Left lung (tissue), 14 donors: ENCODE measurements at regions of chr16 and their contacts with region 1.

Region 1: DNA sequence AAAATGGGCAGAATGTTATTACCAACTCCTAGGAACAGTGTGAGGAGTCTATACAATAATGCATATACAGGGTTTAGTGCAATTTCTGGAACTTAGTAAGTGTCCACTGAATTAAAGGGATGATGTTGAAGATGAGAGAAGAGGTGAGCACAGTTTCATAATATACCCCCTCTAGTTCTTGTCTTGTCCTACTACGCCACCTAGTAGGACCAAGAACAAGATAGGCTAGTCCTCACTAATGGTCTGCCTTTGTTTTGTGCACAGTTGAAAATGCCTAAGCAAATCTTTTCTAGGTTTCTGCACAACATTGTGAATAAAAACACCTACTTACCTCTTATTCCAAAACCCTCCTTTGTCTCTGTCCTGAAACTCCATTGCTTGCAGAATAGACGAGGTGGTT is 670.2 kb downstream of the CDH8 start:
- DNase-seq: no peak
- ATAC-seq: no peak
- H3K4me3 ChIP-seq: no peak overlapping the region
- H3K27ac ChIP-seq: no peak overlapping the region
- H3K4me1 ChIP-seq: no peaks in the 10 kb centered on the region
- H3K27me3 ChIP-seq: no peaks in the 10 kb centered on the region
- CTCF ChIP-seq: no peak

Region 2: DNA sequence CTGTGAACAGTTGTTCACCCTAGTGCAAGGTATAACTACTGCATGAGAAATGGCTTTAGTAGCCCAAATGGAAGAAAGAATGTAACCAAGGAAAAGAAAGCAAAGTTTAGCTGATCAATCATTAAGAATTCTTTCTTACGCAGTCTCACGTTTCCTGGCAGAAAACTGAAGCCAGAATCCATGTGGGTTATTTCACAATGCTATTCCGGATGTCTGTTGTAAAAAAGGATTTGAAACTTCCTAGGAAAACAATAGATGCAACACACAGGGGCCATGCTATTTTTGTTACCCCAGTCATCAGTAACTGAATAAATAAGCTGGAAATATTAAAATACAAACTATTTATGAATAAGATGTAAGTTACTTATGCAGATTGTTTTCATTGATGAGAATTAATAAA is 132.3 kb before region 1 on chr16:
- intact Hi-C with region 1: no loop called
- DNase-seq: peak in 2 of 4 donors; percentile 3 to 28
- ATAC-seq: no peak
- H3K4me3 ChIP-seq: no peak overlapping the region
- H3K27ac ChIP-seq: no peak overlapping the region
- H3K4me1 ChIP-seq: no peaks in the 10 kb centered on the region
- H3K27me3 ChIP-seq: no peaks in the 10 kb centered on the region
- CTCF ChIP-seq: no peak

Region 3: DNA sequence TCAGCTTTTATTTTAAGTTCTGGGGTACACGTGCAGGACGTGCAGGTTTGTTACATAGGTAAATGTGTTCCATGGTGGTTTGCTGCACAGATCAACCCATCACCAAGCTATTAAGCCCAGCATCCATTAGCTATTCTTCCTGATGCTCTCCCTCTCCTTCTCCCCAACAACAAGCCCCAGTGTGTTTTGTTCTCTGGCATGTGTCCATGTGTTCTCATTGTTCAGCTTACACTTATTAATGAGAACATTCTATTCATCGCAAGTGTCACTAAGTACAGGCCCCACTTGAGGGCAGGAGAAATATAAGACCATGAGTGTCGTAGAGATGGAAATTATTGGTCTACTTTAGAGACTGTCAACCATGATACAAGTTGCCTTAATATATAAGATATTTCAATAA is 55.1 kb after region 1 on chr16:
- intact Hi-C with region 1: loop called in 1 of 2 experiments (anchors 10 kb)
- DNase-seq: no peak
- ATAC-seq: no peak
- H3K4me3 ChIP-seq: no peak overlapping the region
- H3K27ac ChIP-seq: no peak overlapping the region
- H3K4me1 ChIP-seq: no peaks in the 10 kb centered on the region
- H3K27me3 ChIP-seq: no peaks in the 10 kb centered on the region
- CTCF ChIP-seq: no peak

Region 4: DNA sequence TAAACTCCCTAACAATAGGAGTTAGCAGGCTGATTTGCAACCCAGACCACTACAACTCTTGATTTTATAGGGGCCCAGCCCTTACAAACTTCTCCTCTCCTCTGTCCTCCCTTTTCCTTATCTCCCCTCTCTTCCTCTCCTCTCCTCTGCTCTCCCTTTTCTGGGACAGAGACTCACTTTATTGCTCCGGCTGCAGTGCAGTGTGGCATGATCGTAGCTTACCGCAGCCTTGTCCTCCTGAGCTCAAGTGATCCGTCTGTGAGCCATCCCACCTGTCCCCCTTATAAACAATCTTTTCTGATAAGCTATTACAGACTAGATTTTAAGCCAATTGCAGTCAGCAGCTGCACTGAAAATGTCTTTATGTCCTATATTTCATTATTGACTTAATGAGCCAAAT is 251.4 kb after region 1 on chr16:
- intact Hi-C with region 1: no loop called
- DNase-seq: no peak
- ATAC-seq: no peak
- H3K4me3 ChIP-seq: no peak overlapping the region
- H3K27ac ChIP-seq: no peak overlapping the region
- H3K4me1 ChIP-seq: no peaks in the 10 kb centered on the region
- H3K27me3 ChIP-seq: no peaks in the 10 kb centered on the region
- CTCF ChIP-seq: no peak